B cell (primary cell): ENCODE measurements at regions of chr3 and their contacts with region 1.

Region 1: DNA sequence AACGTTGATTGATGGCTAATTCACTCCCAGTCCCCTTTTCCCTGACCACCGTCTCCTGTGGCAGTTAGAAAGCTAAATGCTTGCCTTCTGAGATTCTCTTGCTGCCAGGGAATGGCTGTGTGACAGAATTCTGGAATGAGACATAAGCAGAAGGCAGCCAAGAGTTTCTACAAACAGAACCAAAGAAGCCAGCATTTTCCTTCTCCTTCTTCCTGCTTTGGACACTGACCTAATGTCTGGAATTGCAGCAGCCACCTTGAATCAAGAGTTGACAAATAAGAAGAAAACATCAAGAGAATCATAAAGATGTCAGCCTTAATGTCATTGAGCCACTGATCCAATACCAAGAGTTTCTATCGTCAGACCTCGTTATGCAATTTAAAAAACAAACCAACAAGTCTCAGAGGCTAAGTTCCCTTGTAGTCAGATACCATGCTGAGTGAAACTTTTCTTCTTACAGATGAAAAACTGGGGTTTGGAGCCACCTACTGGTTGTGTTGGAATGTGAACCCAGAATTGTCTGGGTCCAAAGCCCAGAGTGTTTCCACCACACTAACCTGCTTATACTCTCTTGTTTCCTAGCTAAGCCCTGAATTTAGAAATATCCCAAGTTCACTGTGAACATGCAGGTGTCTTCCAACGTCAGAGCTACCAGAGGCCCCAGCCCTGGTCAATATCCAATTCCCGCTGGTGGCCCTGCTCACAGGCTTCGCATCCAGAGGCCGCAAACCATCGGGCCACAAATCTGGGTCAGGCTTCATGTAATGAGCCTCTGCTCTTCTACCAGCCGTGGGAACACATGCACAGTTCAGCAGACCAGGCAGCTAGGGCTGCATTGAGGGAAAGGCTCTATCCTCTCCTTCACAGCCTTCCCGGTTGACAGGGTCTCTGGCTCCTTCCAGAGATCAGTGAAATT is 42.5 kb downstream of the MCF2L2 start:
- DNase-seq: peak; percentile 77
- ATAC-seq: peak; percentile 67
- H3K4me3 ChIP-seq: no peak overlapping the region
- H3K4me3 Mint-ChIP-seq: no peak overlapping the region
- H3K27ac ChIP-seq: no peak overlapping the region
- H3K27ac Mint-ChIP-seq: no peak overlapping the region
- H3K4me1 ChIP-seq: peaks cover 14% of the 10 kb centered on the region in 2 donors
- H3K4me1 Mint-ChIP-seq: peaks cover 14% of the 10 kb centered on the region
- H3K27me3 ChIP-seq: peaks cover 0 to 11% (median 4%) of the 10 kb centered on the region in 4 experiments
- H3K27me3 Mint-ChIP-seq: peaks cover 16% of the 10 kb centered on the region
- CTCF ChIP-seq: peak; percentile 76

Region 2: DNA sequence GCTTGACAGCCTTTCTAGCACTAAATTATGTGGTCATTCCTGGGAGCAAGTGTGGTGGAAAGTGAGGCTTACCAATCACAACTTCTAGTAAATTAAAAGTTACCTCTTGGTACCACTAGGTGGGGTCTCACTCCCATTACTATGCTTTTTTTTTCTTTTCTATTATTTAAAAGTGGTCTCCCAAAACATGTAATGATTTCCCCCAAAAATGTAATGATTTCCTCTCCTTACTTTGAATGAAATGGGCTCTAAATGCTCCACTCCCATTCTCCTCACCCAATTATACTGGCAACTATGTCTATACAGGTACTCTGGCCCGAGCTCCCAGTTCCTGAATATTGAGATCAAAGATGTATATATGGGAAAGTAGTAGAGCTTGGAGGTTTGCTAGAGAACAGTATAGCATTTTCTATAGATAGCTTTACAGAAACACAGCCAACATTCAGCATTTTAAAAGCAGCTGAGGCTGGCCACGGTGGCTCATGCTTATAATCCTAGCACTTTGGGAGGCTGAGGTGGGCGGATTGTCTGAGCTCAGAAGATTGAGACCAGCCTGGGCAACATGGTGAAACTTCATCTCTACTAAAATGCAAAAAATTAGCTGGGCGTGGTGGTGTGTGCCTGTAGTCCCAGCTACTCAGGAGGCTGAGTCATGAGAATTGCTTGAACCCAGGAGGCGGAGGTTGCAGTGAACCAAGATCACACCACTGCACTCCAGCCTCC is 476.5 kb before region 1 on chr3:
- CTCF ChIA-PET with region 1: interaction called, 9 read pairs
- POLR2A ChIA-PET with region 1: no interaction called
- intact Hi-C with region 1: loop called (anchors 1 kb)
- DNase-seq: peak; percentile 18
- ATAC-seq: no peak
- H3K4me3 ChIP-seq: no peak overlapping the region
- H3K4me3 Mint-ChIP-seq: no peak overlapping the region
- H3K27ac ChIP-seq: no peak overlapping the region
- H3K27ac Mint-ChIP-seq: no peak overlapping the region
- H3K4me1 ChIP-seq: peaks cover 0 to 3% of the 10 kb centered on the region in 2 donors
- H3K4me1 Mint-ChIP-seq: peaks cover 2% of the 10 kb centered on the region
- H3K27me3 ChIP-seq: no peaks in the 10 kb centered on the region
- H3K27me3 Mint-ChIP-seq: no peaks in the 10 kb centered on the region
- CTCF ChIP-seq: peak; percentile 72

Region 3: GRCh38 chr3:183116025-183116614 is 269.8 kb before region 1 on chr3:
- CTCF ChIA-PET with region 1: interaction called, 230 read pairs
- POLR2A ChIA-PET with region 1: no interaction called
- intact Hi-C with region 1: no loop called
- DNase-seq: peak; percentile 92
- ATAC-seq: peak; percentile 89
- H3K4me3 ChIP-seq: peak overlapping the region in 4 of 5 experiments; percentile 17 to 43 (median 30)
- H3K4me3 Mint-ChIP-seq: peak overlapping the region; percentile 84
- H3K27ac ChIP-seq: no peak overlapping the region
- H3K27ac Mint-ChIP-seq: peak overlapping the region; percentile 87
- H3K4me1 ChIP-seq: peaks cover 31 to 36% of the 10 kb centered on the region in 2 donors
- H3K4me1 Mint-ChIP-seq: peaks cover 33% of the 10 kb centered on the region
- H3K27me3 ChIP-seq: peaks cover 0 to 43% (median 17%) of the 10 kb centered on the region in 4 experiments
- H3K27me3 Mint-ChIP-seq: peaks cover 24% of the 10 kb centered on the region
- CTCF ChIP-seq: no peak

Region 4: DNA sequence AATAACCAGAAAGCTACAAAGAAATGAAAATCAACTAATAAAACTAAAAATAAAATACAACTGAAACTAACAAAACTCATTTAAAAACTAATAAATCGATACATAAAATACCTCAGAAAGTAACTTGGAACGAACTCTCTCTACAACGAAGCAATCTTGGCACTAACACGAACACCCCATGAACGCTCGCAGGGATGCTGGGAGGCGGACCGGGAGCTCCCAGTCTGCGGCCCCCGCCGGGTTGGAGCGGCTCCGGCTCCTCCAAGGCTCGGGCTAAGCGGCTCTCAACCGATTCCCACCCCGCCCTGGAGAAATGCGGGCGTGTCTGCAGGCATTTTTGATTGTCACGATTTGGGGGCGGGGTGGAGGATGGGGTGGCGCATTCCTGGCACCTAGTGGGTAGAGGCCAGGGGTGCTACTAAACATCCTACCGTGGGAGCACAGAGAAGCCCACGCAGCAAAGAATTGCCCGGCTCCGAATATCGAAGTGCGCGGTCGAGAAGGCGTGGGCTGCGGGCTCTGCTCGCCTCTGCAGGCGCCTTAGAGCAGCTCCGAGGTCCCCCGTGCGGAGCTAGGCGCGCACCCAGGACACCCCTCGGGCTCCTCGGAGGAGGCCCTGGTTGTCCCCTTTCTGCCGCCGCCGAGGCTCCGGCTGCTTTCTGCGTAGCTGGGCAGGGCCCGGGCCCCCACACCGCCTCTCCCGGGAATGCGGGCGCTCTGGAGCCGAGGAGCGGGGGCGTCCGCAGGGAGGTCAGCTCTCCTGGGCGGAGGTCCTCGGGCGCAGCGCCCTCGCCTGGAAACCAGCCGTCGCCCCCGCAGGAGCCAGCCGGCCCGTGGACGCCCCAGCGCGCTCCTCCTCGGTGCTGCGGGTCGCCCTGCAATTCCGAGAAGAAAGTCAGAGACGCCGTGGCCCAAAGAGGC is 207.1 kb before region 1 on chr3:
- CTCF ChIA-PET with region 1: interaction called, 213 read pairs
- POLR2A ChIA-PET with region 1: no interaction called
- intact Hi-C with region 1: loop called (anchors 1 kb)
- DNase-seq: peak; percentile 52
- ATAC-seq: peak; percentile 51
- H3K4me3 ChIP-seq: peak overlapping the region in 3 of 5 experiments; percentile 11 to 23 (median 15)
- H3K4me3 Mint-ChIP-seq: peak overlapping the region; percentile 82
- H3K27ac ChIP-seq: no peak overlapping the region
- H3K27ac Mint-ChIP-seq: no peak overlapping the region
- H3K4me1 ChIP-seq: peaks cover 18 to 24% of the 10 kb centered on the region in 2 donors
- H3K4me1 Mint-ChIP-seq: peaks cover 14% of the 10 kb centered on the region
- H3K27me3 ChIP-seq: peaks cover 0 to 75% (median 58%) of the 10 kb centered on the region in 4 experiments
- H3K27me3 Mint-ChIP-seq: peaks cover 62% of the 10 kb centered on the region
- CTCF ChIP-seq: no peak

Region 5: DNA sequence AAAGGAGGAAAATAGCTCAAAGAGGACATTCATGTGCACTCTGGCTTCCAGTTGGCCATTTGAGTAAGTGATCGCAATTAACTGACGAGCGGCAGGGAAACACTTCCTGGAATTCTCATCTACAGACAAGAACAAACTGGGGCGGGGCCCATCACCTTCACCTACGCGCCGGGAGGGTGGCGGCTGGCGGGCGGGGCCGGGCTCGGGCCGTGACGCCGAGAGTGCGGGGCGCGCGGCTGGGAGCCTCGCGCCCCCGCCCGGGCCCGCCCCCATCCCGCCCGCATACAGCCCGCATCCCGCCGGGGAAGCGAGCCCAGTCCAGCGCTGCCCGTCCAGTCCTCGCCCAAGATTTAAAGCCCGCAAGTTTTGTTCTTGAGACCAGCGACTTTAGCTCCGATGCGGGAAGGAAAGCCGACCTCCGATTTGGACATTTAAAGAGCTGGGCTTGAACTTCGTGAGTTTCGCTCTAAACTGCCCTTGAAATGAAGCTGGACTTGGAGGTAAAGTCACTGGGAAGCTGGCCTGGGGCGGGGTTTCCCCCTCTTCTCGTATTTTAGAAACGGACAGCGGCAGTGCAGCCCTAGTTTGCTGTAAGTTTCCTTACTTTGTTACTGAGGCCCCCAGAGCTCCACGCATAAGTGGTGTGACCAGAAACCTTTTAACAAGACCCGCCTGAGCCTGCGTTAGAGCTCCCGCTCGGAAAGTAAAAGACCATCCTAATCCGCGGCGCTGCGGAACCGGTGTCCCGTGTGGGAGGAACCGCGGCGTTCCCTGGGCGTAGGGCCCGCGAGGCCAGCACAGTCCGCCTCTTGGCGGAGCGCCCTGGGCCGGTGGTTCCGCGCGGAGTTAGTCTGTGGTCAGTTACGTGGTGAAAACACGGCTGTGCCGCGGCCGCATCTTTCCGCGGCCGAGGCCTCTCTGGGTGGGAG is 132.7 kb before region 1 on chr3 and contains the start of gene B3GNT5:
- CTCF ChIA-PET with region 1: interaction called, 6 read pairs
- POLR2A ChIA-PET with region 1: no interaction called
- intact Hi-C with region 1: loop called (anchors 2 kb)
- DNase-seq: peak; percentile 55
- ATAC-seq: peak; percentile 40
- H3K4me3 ChIP-seq: peak within 1 kb of the TSS; percentile 38 to 69 (median 53)
- H3K4me3 Mint-ChIP-seq: peak within 1 kb of the TSS; percentile 80
- H3K27ac ChIP-seq: no peak within 1 kb of the TSS
- H3K27ac Mint-ChIP-seq: no peak within 1 kb of the TSS
- H3K4me1 ChIP-seq: peaks cover 12 to 18% of the 10 kb centered on the region in 2 donors
- H3K4me1 Mint-ChIP-seq: peaks cover 10% of the 10 kb centered on the region
- H3K27me3 ChIP-seq: peaks cover 0 to 55% (median 42%) of the 10 kb centered on the region in 4 experiments
- H3K27me3 Mint-ChIP-seq: peaks cover 53% of the 10 kb centered on the region
- CTCF ChIP-seq: no peak
- total RNA-seq, gene B3GNT5: 0.37 TPM in 1 of 2 replicates, not detected in the other

Region 6: DNA sequence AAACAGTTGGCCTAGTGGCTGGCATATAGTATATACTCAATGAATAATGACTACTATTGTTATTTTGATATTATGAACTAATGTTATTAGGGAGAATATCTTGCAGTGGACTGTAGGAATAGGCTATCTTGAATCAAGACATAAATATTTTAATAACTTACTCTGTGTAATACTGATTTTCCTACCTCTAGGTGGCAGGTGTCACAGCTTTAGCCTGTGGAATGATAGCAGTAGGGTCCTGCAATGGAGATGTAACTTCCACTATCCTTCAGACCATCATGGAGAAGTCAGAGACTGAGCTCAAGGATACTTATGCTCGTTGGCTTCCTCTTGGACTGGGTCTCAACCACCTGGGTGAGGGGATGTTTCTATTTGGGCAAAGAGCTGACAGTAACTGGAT is 919.6 kb after region 1 on chr3:
- CTCF ChIA-PET with region 1: no interaction called
- POLR2A ChIA-PET with region 1: no interaction called
- intact Hi-C with region 1: no loop called
- DNase-seq: no peak
- ATAC-seq: no peak
- H3K4me3 ChIP-seq: no peak overlapping the region
- H3K4me3 Mint-ChIP-seq: no peak overlapping the region
- H3K27ac ChIP-seq: no peak overlapping the region
- H3K27ac Mint-ChIP-seq: no peak overlapping the region
- H3K4me1 ChIP-seq: no peaks in the 10 kb centered on the region
- H3K4me1 Mint-ChIP-seq: peaks cover 3% of the 10 kb centered on the region
- H3K27me3 ChIP-seq: no peaks in the 10 kb centered on the region
- H3K27me3 Mint-ChIP-seq: no peaks in the 10 kb centered on the region
- CTCF ChIP-seq: peak; percentile 26

Region 7: GRCh38 chr3:184568924-184569829 is 1183.2 kb after region 1 on chr3:
- CTCF ChIA-PET with region 1: no interaction called
- POLR2A ChIA-PET with region 1: no interaction called
- intact Hi-C with region 1: no loop called
- DNase-seq: peak; percentile 39
- ATAC-seq: no peak
- H3K4me3 ChIP-seq: peak overlapping the region in 2 of 5 experiments; percentile 29 to 39
- H3K4me3 Mint-ChIP-seq: peak overlapping the region; percentile 66
- H3K27ac ChIP-seq: no peak overlapping the region
- H3K27ac Mint-ChIP-seq: no peak overlapping the region
- H3K4me1 ChIP-seq: peaks cover 13 to 17% of the 10 kb centered on the region in 2 donors
- H3K4me1 Mint-ChIP-seq: peaks cover 5% of the 10 kb centered on the region
- H3K27me3 ChIP-seq: peaks cover 0 to 51% (median 10%) of the 10 kb centered on the region in 4 experiments
- H3K27me3 Mint-ChIP-seq: peaks cover 34% of the 10 kb centered on the region
- CTCF ChIP-seq: no peak